MCF 10A (cell line): ENCODE measurements at regions of chr1 and their contacts with region 1.

Region 1: DNA sequence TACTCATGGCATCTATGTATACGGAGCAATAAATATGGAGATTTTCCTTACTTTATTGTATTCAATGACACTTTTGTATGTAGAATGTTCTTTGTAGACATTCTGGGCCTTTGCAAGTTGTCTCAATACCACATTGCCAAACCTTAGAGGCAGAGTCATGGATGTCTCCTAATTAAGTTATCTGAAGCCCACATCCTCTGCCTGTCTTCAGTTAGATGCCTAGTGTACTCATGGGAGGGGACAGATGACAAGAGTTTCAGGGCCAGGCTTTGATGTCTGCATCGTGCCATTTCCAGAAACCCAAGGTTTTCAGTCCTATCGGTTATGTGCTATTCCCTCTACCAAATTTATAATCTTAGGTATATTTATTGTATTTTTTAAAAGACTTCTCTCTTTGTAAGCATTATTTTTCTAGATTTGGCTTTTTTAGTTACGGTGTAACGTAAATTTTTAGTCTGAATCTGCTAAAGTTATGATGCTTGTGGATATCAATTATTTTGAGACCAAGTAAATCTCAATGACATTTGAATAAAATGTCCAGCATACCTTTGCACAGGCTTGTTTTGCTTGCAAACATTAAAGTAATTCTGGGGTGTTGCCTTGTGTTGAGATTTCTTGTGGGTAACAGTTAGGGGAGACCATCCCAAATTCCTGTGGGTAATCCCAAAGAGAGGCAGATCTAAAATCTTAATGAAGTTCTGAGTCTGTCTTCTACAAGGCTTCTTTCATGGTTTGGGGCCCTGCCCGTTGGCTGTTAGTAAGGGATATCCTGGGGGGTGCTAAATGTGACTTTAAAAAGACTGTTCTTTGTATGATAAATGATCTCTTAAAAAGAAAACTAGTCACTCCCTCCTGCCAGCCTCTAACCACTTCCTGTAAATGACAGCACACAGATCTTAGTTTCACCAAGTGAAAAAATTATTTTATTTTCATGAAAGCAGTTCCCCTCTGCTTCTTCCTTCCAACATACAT is 8.0 kb upstream of the MACF1 start:
- DNase-seq: no peak
- H3K4me3 Mint-ChIP-seq: no peak overlapping the region
- H3K27ac Mint-ChIP-seq: peak overlapping the region; percentile 59
- H3K4me1 Mint-ChIP-seq: peaks cover 32% of the 10 kb centered on the region
- H3K27me3 Mint-ChIP-seq: no peaks in the 10 kb centered on the region
- CTCF ChIP-seq: no peak

Region 2: DNA sequence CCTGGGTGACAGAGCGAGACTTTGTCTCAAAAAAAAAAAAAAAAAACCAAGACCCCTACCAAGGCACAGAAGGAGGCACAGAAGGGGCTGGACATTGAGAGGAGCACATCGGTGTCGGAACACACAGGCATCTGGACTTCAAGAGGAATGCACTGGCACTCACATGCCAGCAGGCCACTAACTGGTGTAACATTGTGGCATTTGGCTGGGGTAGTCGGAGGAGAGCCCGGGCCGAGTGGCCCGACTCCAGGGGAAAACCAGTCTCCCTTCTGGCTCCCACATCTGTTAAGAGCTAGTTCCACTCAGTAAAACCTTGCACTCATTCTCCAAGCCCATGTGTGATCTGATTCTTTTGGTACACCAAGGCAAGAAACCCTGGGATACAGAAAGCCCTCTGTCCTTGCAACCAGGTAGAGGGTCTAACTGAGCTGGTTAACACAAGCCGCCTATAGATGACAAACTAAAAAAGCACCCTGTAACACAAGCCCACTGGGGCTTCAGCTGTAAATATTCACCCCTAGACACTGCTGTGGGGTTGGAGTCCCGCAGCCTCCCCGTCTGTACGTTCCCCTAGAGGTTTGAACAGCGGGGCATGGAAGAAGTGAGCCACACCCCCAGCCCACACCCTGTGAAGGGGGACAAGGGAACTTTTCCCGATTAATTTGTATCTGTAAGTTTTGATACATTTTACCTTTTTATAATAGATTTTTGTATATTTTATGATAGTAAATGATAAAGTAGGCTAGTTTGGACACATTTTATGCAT is 222.7 kb before region 1 on chr1:
- CTCF ChIA-PET with region 1: no interaction called
- POLR2A ChIA-PET with region 1: no interaction called
- intact Hi-C with region 1: no loop called
- DNase-seq: no peak
- H3K4me3 Mint-ChIP-seq: no peak overlapping the region
- H3K27ac Mint-ChIP-seq: no peak overlapping the region
- H3K4me1 Mint-ChIP-seq: no peaks in the 10 kb centered on the region
- H3K27me3 Mint-ChIP-seq: no peaks in the 10 kb centered on the region
- CTCF ChIP-seq: no peak

Region 3: GRCh38 chr1:39116868-39117728 is 79.4 kb before region 1 on chr1:
- CTCF ChIA-PET with region 1: interaction called, 15 read pairs
- POLR2A ChIA-PET with region 1: interaction called, 327 read pairs
- intact Hi-C with region 1: no loop called
- DNase-seq: peak; percentile 65
- H3K4me3 Mint-ChIP-seq: no peak overlapping the region
- H3K27ac Mint-ChIP-seq: peak overlapping the region; percentile 5
- H3K4me1 Mint-ChIP-seq: peaks cover 8% of the 10 kb centered on the region
- H3K27me3 Mint-ChIP-seq: no peaks in the 10 kb centered on the region
- CTCF ChIP-seq: no peak

Region 4: DNA sequence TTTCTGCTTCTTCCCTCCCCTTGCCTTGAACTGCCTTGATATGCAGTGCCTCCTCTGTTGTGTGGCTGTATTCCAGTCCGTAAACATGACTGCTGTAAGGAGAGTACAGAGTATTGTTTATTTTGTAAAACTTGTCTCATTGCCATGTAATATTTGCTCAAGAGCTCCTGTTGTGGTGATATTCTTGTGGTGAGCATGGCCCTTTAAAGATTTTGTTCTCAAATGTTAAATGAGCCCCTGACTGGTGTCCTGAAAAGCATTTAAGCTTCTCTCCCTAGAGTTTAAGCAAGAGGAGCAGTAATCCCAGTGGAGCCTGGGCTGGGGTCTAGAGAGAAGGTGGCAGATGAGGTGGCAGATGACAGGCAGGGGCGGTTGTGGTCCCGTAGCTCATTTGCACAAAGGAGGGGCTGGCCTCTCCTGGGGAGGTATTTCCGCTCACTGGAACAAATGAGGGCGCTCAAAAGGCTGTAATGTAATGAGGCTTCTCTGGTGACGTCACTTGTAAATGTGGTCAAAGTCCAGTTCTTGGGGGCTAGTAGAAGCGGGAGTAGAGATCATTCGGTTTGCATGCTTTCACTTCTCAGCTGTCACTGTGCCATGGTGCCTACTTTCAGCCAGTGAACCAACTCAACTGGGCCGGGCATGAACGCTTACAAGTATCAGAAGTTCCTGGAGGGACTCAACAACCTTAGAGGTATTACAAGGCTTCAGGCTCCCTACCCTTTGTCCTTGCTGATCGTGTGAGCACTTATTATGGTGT is 38.0 kb before region 1 on chr1:
- CTCF ChIA-PET with region 1: interaction called, 46 read pairs
- POLR2A ChIA-PET with region 1: interaction called, 27 read pairs
- intact Hi-C with region 1: no loop called
- DNase-seq: peak; percentile 49
- H3K4me3 Mint-ChIP-seq: peak overlapping the region; percentile 70
- H3K27ac Mint-ChIP-seq: peak overlapping the region; percentile 82
- H3K4me1 Mint-ChIP-seq: peaks cover 59% of the 10 kb centered on the region
- H3K27me3 Mint-ChIP-seq: no peaks in the 10 kb centered on the region
- CTCF ChIP-seq: no peak

Region 5: GRCh38 chr1:39214998-39215873 is 18.7 kb after region 1 on chr1:
- CTCF ChIA-PET with region 1: interaction called, 21 read pairs
- POLR2A ChIA-PET with region 1: interaction called, 22 read pairs
- intact Hi-C with region 1: no loop called
- DNase-seq: no peak
- H3K4me3 Mint-ChIP-seq: no peak overlapping the region
- H3K27ac Mint-ChIP-seq: peak overlapping the region; percentile 60
- H3K4me1 Mint-ChIP-seq: peaks cover 33% of the 10 kb centered on the region
- H3K27me3 Mint-ChIP-seq: no peaks in the 10 kb centered on the region
- CTCF ChIP-seq: no peak

Region 6: DNA sequence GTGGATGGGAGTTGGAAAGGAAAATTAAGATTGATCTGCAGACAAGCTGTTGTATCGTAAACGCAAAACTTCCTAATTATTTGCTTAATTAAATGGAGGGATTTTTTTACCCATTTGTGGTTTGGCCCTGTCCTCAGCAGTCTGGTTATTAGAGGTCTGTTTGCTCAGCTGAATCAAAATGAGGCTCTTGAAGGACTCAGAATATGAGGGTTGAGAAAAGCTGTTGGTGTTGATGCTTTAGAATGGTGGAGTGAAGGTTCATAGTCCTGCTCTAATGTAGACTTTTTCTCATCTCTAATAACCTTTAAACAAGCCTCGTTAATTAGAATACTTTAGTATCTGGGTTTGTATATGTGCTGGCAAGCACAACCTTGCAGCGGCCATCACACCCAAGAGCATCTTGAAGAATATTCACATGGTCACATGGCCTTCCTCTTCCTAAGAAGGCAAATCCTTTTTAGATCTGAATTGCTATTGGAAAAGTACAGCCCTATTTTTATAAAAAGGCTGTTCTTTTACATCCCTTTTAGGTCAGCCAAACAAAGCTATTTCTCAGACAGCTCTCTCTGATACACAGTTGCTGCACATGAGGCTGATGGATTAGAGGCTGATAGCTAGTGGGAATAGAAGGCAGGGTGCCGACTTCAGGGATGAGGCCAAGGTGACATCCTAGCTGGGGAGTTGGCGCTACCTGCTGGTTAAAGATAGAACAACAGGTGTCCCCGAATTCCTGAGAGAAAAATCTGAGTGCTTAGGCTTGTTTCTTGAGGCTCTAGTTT is 61.8 kb after region 1 on chr1:
- CTCF ChIA-PET with region 1: interaction called, 141 read pairs
- POLR2A ChIA-PET with region 1: interaction called, 54 read pairs
- intact Hi-C with region 1: loop called (anchors 1 kb)
- DNase-seq: peak; percentile 75
- H3K4me3 Mint-ChIP-seq: no peak overlapping the region
- H3K27ac Mint-ChIP-seq: peak overlapping the region; percentile 41
- H3K4me1 Mint-ChIP-seq: peaks cover 10% of the 10 kb centered on the region
- H3K27me3 Mint-ChIP-seq: no peaks in the 10 kb centered on the region
- CTCF ChIP-seq: peak; percentile 86

Region 7: GRCh38 chr1:39408641-39409054 is 212.1 kb after region 1 on chr1:
- CTCF ChIA-PET with region 1: interaction called, 9 read pairs
- POLR2A ChIA-PET with region 1: interaction called, 12 read pairs
- intact Hi-C with region 1: loop called (anchors 10 kb)
- DNase-seq: peak; percentile 93
- H3K4me3 Mint-ChIP-seq: peak overlapping the region; percentile 83
- H3K27ac Mint-ChIP-seq: peak overlapping the region; percentile 71
- H3K4me1 Mint-ChIP-seq: peaks cover 55% of the 10 kb centered on the region
- H3K27me3 Mint-ChIP-seq: no peaks in the 10 kb centered on the region
- CTCF ChIP-seq: no peak

Region 8: DNA sequence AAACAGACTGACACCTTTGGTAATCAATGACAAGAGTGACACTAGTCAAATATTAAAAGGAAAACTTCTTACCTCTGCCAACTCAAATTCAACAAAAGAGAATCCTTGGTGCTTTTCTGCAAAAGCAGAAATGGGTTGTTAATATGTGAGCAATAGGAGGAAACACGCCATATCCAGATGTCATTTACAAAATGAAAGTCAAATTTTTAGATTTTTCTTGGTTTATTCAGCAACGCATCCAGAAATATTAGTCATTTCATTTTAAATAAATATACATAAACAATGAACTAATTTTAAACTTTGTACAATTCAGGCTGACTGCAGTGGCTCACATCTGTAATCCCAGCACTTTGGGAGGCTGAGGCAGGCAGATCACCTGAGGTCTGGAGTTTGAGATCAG is 357.7 kb after region 1 on chr1:
- CTCF ChIA-PET with region 1: no interaction called
- POLR2A ChIA-PET with region 1: no interaction called
- intact Hi-C with region 1: no loop called
- DNase-seq: no peak
- H3K4me3 Mint-ChIP-seq: no peak overlapping the region
- H3K27ac Mint-ChIP-seq: no peak overlapping the region
- H3K4me1 Mint-ChIP-seq: no peaks in the 10 kb centered on the region
- H3K27me3 Mint-ChIP-seq: no peaks in the 10 kb centered on the region
- CTCF ChIP-seq: no peak